Natural killer cell (primary cell): ENCODE measurements at regions of chr7 and their contacts with region 1.

Region 1: GRCh38 chr7:102279537-102280400 is 6.9 kb upstream of the SH2B2 start:
- DNase-seq: peak; percentile 29 to 80
- ATAC-seq: peak; percentile 71 to 86 (median 84)
- H3K4me3 ChIP-seq: no peak overlapping the region
- H3K4me3 Mint-ChIP-seq: no peak overlapping the region
- H3K27ac ChIP-seq: no peak overlapping the region
- H3K27ac Mint-ChIP-seq: no peak overlapping the region
- H3K4me1 ChIP-seq: peaks cover 17% of the 10 kb centered on the region
- H3K4me1 Mint-ChIP-seq: peaks cover 0 to 10% of the 10 kb centered on the region in 2 donors
- H3K27me3 ChIP-seq: no peaks in the 10 kb centered on the region
- H3K27me3 Mint-ChIP-seq: no peaks in the 10 kb centered on the region
- CTCF ChIP-seq: peak; percentile 49

Region 2: GRCh38 chr7:102248456-102249395 is 31.0 kb before region 1 on chr7:
- intact Hi-C with region 1: no loop called
- DNase-seq: no peak
- ATAC-seq: no peak
- H3K4me3 ChIP-seq: no peak overlapping the region
- H3K4me3 Mint-ChIP-seq: no peak overlapping the region
- H3K27ac ChIP-seq: no peak overlapping the region
- H3K27ac Mint-ChIP-seq: no peak overlapping the region
- H3K4me1 ChIP-seq: no peaks in the 10 kb centered on the region
- H3K4me1 Mint-ChIP-seq: peaks cover 12 to 14% of the 10 kb centered on the region in 2 donors
- H3K27me3 ChIP-seq: no peaks in the 10 kb centered on the region
- H3K27me3 Mint-ChIP-seq: no peaks in the 10 kb centered on the region
- CTCF ChIP-seq: no peak

Region 3: GRCh38 chr7:102390697-102391484 is 111.1 kb after region 1 on chr7:
- intact Hi-C with region 1: loop called (anchors 1 kb)
- DNase-seq: peak; percentile 66 to 83
- ATAC-seq: peak; percentile 75 to 86 (median 81)
- H3K4me3 ChIP-seq: no peak overlapping the region
- H3K4me3 Mint-ChIP-seq: no peak overlapping the region
- H3K27ac ChIP-seq: no peak overlapping the region
- H3K27ac Mint-ChIP-seq: no peak overlapping the region
- H3K4me1 ChIP-seq: peaks cover 8% of the 10 kb centered on the region
- H3K4me1 Mint-ChIP-seq: peaks cover 5% of the 10 kb centered on the region in 2 donors
- H3K27me3 ChIP-seq: no peaks in the 10 kb centered on the region
- H3K27me3 Mint-ChIP-seq: no peaks in the 10 kb centered on the region
- CTCF ChIP-seq: peak; percentile 83